Activated CD4-positive, alpha-beta T cell treated with anti-CD3 and anti-CD28 coated beads, Interleukin-2, amount 10 ng/mL, durations not matched to agents 24 days and 14 days (primary cell): ENCODE measurements at regions of chr2 and their contacts with region 1.

Region 1: GRCh38 chr2:172465417-172466334 is 38.3 kb downstream of the ITGA6 start:
- DNase-seq: peak; percentile 92
- H3K4me3 Mint-ChIP-seq: no peak overlapping the region
- H3K27ac Mint-ChIP-seq: no peak overlapping the region
- H3K4me1 Mint-ChIP-seq: peaks cover 47% of the 10 kb centered on the region
- H3K27me3 Mint-ChIP-seq: no peaks in the 10 kb centered on the region

Region 2: DNA sequence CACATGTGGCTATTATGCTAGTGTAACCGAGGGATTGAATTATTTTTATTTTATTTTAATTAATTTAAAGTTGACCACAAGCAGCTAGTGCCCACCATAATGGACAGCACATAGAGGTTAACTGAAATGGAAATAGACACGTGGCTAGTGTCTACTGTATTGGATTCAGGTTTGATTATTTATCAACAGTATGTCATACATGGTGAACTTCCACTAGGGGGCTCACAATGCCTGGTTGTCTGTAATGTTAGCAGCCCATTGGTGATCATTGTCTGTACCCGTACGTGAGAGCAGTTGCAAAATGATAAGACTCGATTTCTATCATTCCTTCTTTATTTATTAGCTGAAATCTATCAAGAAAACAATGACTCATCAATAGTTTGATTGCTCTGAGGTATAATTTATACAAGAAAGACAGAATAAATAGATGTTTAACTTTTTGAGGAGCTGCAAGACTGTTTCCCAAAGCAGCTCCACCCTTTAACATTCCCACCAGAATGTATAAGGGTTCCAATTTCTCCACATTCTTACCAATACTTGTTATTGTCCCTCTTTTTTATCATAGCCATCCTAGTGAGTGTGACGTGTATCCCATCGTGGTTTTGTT is 866.9 kb before region 1 on chr2:
- intact Hi-C with region 1: loop called (anchors 1 kb)
- DNase-seq: peak; percentile 83
- H3K4me3 Mint-ChIP-seq: no peak overlapping the region
- H3K27ac Mint-ChIP-seq: no peak overlapping the region
- H3K4me1 Mint-ChIP-seq: peaks cover 2% of the 10 kb centered on the region
- H3K27me3 Mint-ChIP-seq: peaks cover 14% of the 10 kb centered on the region

Region 3: DNA sequence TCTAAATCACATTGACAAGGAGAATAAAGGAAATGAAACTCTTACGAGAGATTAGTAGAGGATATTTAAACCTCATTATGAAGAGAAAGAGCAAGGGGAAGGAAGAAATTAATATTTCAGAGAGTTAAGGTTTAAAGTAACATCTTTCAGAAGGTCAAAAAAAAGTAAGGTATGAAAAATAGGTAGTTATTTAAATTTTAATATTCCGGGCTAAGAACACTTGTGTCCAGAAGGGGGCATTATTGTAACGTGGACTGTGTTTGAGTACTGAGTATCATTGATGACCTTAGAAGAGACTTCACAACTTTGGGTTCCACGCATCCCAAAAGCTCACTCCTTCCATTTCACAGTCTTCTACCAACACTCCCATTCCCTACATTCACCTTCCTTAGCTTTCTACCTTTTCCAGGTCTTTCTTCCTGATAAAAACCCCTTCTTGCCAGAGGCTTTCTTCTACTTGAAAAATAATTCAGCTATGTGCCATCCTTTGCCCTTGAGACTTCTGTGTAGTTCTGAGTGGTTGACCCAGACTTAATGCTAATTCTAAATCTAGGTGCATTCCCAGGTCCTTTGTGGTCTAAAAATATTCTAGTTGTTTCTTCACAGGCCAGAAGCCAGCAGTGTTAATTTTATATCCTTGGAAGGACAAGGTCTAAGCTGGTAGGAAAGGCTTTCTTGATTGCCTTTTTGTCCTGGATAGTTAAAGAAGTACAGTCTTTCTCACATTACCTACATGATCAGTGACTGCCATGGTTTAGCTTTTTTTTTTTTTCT is 761.9 kb before region 1 on chr2:
- intact Hi-C with region 1: loop called (anchors 5 kb)
- DNase-seq: peak; percentile 66
- H3K4me3 Mint-ChIP-seq: no peak overlapping the region
- H3K27ac Mint-ChIP-seq: no peak overlapping the region
- H3K4me1 Mint-ChIP-seq: peaks cover 3% of the 10 kb centered on the region
- H3K27me3 Mint-ChIP-seq: no peaks in the 10 kb centered on the region

Region 4: GRCh38 chr2:172131713-172132555 is 333.7 kb before region 1 on chr2:
- intact Hi-C with region 1: loop called (anchors 5 kb)
- DNase-seq: no peak
- H3K4me3 Mint-ChIP-seq: no peak overlapping the region
- H3K27ac Mint-ChIP-seq: no peak overlapping the region
- H3K4me1 Mint-ChIP-seq: no peaks in the 10 kb centered on the region
- H3K27me3 Mint-ChIP-seq: peaks cover 17% of the 10 kb centered on the region

Region 5: DNA sequence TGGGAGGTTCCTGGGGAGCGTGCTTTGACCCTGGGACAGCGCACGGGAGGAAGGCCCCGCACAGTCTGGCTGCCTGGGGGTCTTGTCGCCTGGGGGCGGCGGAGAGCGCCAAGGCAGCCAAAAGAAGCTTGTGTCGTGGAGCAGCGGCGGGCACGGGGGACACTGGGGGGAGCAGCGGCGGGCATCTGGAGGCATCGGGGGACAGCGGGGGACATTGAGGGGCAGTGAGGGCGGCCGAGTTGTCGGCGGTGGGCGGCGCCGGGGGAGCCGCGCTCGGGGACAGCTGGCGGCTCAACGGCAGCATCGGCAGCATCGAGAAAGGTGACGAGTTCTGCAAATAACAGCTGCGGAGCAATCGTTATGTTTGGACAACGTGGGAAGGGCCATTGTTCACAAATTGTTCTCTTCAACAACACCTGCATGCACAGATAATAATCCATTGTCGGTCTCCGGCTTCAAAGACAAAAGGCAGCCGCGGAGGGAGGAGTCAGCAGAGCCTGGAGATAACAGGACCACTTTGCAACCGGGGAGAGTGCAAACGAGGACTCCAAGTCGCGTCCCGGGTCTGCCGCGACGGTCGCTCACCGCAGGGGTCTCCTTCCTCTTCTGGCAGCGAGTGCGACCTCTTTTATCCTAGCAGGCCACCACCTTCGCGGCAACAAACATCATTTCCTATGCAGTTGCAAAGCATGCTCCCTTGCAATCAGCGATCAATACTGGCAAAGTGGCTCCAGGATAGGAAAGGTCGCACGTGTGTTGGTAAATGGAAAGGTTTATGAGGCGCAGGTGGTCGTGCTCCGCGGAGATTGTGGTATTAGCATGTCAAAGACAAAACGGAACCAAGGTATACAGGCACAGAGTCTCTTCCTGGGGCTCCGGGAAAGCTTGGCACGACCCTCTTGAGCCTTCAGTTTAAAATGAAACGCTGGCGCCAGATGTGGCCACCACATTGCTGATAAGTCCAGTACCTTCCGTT is 230.7 kb before region 1 on chr2:
- intact Hi-C with region 1: loop called (anchors 10 kb)
- DNase-seq: peak; percentile 78
- H3K4me3 Mint-ChIP-seq: peak overlapping the region; percentile 84
- H3K27ac Mint-ChIP-seq: no peak overlapping the region
- H3K4me1 Mint-ChIP-seq: peaks cover 15% of the 10 kb centered on the region
- H3K27me3 Mint-ChIP-seq: peaks cover 52% of the 10 kb centered on the region

Region 6: GRCh38 chr2:172427256-172427989 is 38.3 kb before region 1 on chr2 and contains the start of gene ITGA6:
- intact Hi-C with region 1: loop called (anchors 1 kb)
- DNase-seq: peak; percentile 90
- H3K4me3 Mint-ChIP-seq: peak within 1 kb of the TSS; percentile 79
- H3K27ac Mint-ChIP-seq: no peak within 1 kb of the TSS
- H3K4me1 Mint-ChIP-seq: peaks cover 20% of the 10 kb centered on the region
- H3K27me3 Mint-ChIP-seq: peaks cover 71% of the 10 kb centered on the region
- total RNA-seq, gene ITGA6: 0.68 and 0.85 TPM in 2 replicates